AG04449 (cell line): ENCODE measurements at regions of chr1 and their contacts with region 1.

Region 1: DNA sequence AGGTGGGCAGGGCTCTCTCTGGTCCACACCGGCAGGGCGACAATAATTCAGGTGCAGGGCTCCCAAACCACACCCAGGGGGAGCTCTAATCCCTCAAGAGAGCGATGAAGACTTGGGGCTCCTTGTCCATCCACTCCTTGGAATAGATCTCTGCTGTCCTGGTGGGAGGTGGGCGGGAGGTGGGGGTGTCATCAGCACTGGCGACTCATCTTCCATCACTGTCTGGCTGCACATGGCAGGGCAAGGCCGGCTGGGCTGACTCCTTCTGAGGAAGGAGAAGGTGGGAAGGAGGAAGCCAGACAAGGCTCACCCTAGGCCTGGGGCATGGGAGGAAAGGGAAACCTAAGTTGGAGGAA is 29.3 kb downstream of the TNNT2 start:
- DNase-seq: no peak
- H3K4me3 ChIP-seq: no peak overlapping the region
- CTCF ChIP-seq: peak; percentile 78

Region 2: GRCh38 chr1:201254625-201255506 is 93.3 kb before region 1 on chr1:
- CTCF ChIA-PET with region 1: interaction called, 145 read pairs
- POLR2A ChIA-PET with region 1: no interaction called
- DNase-seq: no peak
- H3K4me3 ChIP-seq: no peak overlapping the region
- CTCF ChIP-seq: peak; percentile 99

Region 3: GRCh38 chr1:201288766-201289165 is 59.4 kb before region 1 on chr1:
- CTCF ChIA-PET with region 1: interaction called, 32 read pairs
- POLR2A ChIA-PET with region 1: no interaction called
- DNase-seq: no peak
- H3K4me3 ChIP-seq: no peak overlapping the region
- CTCF ChIP-seq: no peak

Region 4: DNA sequence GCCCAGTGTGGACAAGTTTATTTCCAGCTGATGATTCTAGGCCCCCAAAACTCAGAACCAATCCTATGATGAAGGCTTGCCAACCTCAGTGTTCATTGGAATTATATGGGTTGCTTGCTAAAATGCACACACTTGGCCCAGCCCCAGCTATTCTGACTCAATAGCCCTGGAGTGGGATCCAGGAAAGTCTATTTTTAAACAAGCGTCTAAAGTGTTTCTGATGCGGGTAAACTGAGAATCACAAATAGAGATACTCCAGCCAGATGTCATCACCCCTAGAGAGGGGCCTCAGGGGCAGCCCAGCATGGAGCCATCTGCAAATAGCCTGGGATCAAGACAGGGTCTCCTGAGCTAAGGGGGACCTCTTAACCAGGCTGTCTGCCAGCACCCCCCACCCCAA is 18.9 kb before region 1 on chr1:
- CTCF ChIA-PET with region 1: interaction called, 129 read pairs
- POLR2A ChIA-PET with region 1: no interaction called
- DNase-seq: no peak
- H3K4me3 ChIP-seq: no peak overlapping the region
- CTCF ChIP-seq: no peak

Region 5: DNA sequence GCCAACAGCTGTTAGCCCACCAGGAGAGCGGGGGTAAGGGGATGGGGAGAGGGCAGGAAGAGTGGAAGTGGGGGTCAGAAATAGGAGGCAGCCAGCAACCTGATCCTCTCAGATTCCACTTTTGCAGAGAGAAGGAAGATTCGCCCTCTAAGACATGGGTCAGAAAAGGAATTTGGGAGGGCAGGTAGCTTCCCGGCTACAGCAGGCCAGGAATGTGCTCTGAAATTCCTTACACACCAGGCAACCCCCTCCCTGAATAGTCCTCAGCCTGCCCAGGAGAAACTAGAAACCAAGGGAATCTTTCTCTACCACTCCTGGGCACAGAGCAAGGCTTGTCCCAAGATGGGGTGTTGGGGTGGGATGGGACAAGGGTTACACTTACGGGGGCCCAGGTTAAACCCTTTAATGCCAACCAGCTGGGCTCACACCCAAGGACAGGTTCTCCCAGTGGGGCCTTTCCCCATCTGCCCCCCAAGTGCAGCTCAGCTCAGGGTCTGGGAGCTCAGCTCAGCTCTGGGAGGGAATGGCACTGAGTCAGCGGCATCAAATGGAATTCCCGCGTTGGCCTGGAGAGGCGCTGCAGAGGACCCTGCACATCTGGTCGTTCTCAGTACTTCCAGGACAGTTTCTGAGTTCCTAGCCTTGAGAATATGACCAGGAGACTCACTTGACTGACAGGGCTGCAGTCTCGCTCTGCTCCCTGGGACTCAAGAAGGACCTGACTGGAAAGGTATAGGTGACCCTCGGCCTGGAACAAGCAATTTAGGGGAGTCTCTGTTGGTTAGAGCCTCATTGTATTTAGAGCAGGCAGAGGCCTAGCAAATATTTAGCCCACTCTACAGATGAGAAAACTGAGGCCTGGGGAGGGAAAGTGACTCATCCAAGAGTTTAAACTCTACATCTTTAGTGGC is 28.5 kb after region 1 on chr1:
- CTCF ChIA-PET with region 1: interaction called, 68 read pairs
- POLR2A ChIA-PET with region 1: no interaction called
- DNase-seq: no peak
- H3K4me3 ChIP-seq: no peak overlapping the region
- CTCF ChIP-seq: peak; percentile 83

Region 6: DNA sequence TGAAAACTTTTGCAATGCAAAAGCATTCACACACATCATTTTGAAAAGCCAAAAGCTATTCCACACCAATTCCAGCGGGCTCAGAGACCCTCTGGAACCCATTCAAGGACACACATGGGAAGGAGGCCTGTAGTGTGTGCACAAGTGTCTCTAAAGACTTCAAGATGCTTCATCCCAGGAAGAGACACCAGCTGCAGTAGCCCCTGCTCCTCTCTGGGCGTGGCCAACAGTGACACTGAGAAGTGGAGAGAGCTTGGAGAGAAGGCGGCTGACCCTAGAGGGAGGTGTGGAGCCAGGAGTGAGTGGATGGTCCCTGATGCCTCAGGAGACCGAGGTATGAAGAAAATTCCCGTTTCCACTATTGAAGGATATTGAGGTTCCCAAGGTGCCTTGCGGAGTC is 88.2 kb after region 1 on chr1:
- CTCF ChIA-PET with region 1: interaction called, 10 read pairs
- POLR2A ChIA-PET with region 1: no interaction called
- DNase-seq: no peak
- H3K4me3 ChIP-seq: no peak overlapping the region
- CTCF ChIP-seq: peak; percentile 46